Activated B cell treated with CpG ODN at 0.5 μM for 24 hours (primary cell): ENCODE measurements at regions of chr10 and their contacts with region 1.

Region 1: DNA sequence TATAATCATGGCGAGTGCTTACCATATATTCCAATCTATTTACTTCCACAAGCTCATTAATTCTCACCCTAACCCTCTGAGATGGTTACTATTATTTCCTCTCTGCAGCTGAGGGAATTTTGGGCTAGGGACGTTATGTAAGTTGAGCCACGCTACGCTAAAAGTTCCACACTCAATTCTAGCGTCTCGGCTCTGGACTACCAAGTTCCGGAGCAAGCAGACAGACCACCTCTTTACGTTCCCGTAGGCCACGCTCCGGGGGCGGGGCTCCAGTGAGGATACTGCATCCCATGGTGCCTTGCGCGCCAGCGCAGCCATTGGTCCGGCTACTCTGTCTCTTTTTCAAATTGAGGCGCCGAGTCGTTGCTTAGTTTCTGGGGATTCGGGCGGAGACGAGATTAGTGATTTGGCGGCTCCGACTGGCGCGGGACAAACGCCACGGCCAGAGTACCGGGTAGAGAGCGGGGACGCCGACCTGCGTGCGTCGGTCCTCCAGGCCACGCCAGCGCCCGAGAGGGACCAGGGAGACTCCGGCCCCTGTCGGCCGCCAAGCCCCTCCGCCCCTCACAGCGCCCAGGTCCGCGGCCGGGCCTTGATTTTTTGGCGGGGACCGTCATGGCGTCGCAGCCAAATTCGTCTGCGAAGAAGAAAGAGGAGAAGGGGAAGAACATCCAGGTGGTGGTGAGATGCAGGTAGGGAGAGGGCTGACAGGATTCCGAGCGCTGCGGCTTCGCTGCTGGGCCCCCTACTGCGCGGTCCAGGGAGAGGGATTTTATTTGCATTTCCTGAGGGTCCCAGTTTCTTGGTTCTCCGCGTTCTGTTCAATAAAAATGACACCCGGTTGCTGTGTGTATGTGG is at the start of gene KIF11:
- DNase-seq: peak; percentile 92
- ATAC-seq: peak; percentile 85
- H3K4me3 Mint-ChIP-seq: peak within 1 kb of the TSS; percentile 96
- H3K27ac Mint-ChIP-seq: peak within 1 kb of the TSS; percentile 99
- H3K4me1 Mint-ChIP-seq: peaks cover 36% of the 10 kb centered on the region
- H3K27me3 Mint-ChIP-seq: no peaks in the 10 kb centered on the region
- CTCF ChIP-seq: no peak
- total RNA-seq, gene KIF11: 2.2 and 2.5 TPM in 2 replicates

Region 2: DNA sequence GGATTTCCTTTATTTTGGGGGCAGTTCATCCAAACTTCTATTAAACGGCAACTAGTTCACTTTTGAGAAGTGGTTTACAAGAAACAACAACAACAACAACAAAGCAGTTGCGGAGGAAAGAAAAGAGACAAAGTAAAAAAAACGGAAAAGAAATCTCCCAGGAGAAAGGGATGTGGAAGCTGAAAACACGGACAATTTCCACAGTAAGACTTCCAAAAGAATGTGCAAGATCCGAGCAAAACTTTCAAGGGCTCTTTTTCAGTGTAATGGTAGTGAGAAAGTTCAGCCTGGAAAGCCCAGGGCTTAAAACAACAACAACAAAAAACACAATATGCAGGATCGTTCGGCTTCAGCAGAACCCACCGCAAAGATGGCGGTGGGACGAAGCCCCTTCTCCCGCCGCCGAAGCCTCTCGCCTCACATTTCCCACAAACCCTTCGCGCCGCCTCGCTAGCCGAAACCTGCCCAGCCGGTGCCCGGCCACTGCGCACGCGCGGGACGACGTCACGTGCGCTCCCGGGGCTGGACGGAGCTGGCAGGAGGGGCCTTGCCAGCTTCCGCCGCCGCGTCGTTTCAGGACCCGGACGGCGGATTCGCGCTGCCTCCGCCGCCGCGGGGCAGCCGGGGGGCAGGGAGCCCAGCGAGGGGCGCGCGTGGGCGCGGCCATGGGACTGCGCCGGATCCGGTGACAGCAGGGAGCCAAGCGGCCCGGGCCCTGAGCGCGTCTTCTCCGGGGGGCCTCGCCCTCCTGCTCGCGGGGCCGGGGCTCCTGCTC is 794.9 kb before region 1 on chr10 and contains the start of gene TNKS2:
- CTCF ChIA-PET with region 1: no interaction called
- POLR2A ChIA-PET with region 1: interaction called, 7 read pairs
- intact Hi-C with region 1: loop called (anchors 2 kb)
- DNase-seq: peak; percentile 96
- ATAC-seq: peak; percentile 70
- H3K4me3 Mint-ChIP-seq: peak within 1 kb of the TSS; percentile 93
- H3K27ac Mint-ChIP-seq: peak within 1 kb of the TSS; percentile 97
- H3K4me1 Mint-ChIP-seq: peaks cover 66% of the 10 kb centered on the region
- H3K27me3 Mint-ChIP-seq: no peaks in the 10 kb centered on the region
- CTCF ChIP-seq: no peak
- total RNA-seq, gene TNKS2: 29.5 and 33.1 TPM in 2 replicates

Region 3: DNA sequence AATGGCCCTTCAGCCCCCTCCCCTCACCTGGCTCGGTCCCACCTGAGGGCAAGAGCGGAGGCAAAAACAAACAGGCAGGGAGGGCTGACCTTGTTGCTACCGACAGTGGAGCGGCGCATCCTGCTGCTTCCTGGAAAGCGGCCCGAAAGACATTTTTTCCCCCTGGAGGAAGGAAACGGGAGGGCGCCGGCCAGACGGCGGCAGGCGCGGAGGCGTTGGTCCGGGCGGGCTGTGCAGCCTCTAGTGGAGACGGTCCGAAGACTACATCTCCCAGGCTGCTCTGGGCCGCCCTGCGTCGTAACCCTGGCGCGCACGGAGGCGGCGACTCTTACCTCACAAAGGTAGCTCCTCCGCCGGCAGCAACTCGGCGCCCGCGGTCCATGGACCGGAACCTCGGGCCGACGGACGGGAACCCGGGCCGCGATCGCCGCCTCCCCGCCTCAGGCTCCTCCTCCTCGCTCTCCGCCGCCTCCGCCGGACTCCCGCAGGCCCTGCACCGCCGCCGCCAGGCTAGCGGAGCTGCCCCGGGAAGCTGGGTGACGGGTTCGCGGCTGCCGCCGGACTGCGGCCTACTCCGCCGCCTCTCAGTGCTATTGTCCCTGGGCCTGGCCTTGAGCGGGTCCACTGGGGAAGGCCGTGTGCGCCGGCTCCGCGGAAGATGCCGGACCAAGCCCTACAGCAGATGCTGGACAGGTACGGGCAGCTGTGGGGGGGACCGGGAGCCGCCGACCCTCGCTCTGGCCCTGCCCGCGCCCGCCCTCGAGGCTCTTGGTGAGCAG is 302.0 kb before region 1 on chr10 and contains the starts of genes CPEB3 and MARCHF5:
- CTCF ChIA-PET with region 1: no interaction called
- POLR2A ChIA-PET with region 1: interaction called, 7 read pairs
- intact Hi-C with region 1: loop called (anchors 1 kb)
- DNase-seq: peak; percentile 87
- ATAC-seq: peak; percentile 97
- H3K4me3 Mint-ChIP-seq: peak within 1 kb of the TSS; percentile 96
- H3K27ac Mint-ChIP-seq: peak within 1 kb of the TSS; percentile 84
- H3K4me1 Mint-ChIP-seq: peaks cover 28% of the 10 kb centered on the region
- H3K27me3 Mint-ChIP-seq: no peaks in the 10 kb centered on the region
- CTCF ChIP-seq: no peak
- total RNA-seq, gene CPEB3: 2.2 and 2.5 TPM in 2 replicates
- total RNA-seq, gene MARCHF5: 21.6 and 26.5 TPM in 2 replicates

Region 4: DNA sequence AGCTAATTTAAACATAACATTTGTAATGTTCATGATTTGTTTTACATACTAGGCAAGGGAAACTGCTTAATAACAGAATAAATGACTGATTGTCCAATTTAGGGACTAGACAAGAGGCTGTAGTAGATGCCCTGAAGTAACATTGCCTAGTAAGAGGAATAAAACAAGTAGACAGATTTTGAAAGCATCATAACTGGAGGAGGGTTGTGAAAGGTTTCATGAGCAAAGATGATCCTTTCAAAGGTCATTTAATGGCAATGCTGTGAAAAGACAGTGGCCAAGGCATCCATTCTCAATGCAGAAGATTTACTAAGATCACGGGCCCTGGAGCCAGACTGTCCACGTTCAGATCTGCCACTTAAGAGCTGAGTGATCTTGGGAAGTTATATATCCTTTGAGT is 51.9 kb after region 1 on chr10:
- CTCF ChIA-PET with region 1: interaction called, 3 read pairs
- POLR2A ChIA-PET with region 1: no interaction called
- intact Hi-C with region 1: loop called (anchors 2 kb)
- DNase-seq: no peak
- ATAC-seq: no peak
- H3K4me3 Mint-ChIP-seq: no peak overlapping the region
- H3K27ac Mint-ChIP-seq: no peak overlapping the region
- H3K4me1 Mint-ChIP-seq: peaks cover 5% of the 10 kb centered on the region
- H3K27me3 Mint-ChIP-seq: no peaks in the 10 kb centered on the region
- CTCF ChIP-seq: no peak

Region 5: DNA sequence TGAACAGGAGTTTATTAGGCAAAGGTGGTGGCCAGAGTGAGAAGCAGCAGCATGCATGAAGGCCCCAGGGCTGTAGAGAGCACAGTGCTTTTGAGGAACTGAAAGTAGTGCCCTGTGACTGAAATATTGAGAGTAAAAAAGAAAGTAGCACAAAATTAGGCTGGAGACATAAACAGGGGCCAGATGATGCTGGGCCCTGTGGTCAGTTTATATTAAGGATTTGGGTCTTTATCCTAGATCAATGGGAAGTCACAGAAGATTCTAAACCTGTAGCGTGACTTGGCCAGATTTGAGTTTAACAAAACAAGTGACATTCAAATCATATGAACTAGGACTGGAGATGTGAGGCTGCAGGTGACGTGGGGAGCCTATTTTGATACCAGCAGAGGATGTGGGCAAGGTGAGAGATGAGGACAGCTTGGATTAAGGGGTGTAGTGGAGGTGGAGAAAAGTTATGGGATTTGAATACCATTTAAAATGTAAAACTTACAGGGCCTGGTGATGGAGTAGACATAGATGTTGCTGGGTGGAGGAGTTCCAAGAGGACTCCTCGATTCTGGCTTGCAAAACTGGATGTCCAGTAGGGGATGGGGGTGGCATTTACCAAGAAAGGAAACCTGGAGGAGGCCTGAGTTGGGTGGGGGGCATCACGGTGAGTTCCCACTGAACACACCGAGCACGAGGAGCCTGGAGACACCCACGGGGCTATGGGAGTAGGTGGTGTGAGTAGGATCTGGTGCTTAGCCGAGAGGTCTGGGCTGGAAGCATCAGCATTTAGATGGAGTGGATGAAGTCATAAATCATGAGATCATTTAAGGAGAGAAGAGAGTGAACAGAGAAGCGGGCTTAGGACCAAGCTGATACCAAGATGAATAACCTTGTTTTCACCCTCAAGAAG is 149.6 kb after region 1 on chr10:
- CTCF ChIA-PET with region 1: no interaction called
- POLR2A ChIA-PET with region 1: interaction called, 6 read pairs
- intact Hi-C with region 1: loop called (anchors 1 kb)
- DNase-seq: peak; percentile 30
- ATAC-seq: peak; percentile 95
- H3K4me3 Mint-ChIP-seq: peak overlapping the region; percentile 78
- H3K27ac Mint-ChIP-seq: peak overlapping the region; percentile 95
- H3K4me1 Mint-ChIP-seq: peaks cover 79% of the 10 kb centered on the region
- H3K27me3 Mint-ChIP-seq: no peaks in the 10 kb centered on the region
- CTCF ChIP-seq: no peak

Region 6: DNA sequence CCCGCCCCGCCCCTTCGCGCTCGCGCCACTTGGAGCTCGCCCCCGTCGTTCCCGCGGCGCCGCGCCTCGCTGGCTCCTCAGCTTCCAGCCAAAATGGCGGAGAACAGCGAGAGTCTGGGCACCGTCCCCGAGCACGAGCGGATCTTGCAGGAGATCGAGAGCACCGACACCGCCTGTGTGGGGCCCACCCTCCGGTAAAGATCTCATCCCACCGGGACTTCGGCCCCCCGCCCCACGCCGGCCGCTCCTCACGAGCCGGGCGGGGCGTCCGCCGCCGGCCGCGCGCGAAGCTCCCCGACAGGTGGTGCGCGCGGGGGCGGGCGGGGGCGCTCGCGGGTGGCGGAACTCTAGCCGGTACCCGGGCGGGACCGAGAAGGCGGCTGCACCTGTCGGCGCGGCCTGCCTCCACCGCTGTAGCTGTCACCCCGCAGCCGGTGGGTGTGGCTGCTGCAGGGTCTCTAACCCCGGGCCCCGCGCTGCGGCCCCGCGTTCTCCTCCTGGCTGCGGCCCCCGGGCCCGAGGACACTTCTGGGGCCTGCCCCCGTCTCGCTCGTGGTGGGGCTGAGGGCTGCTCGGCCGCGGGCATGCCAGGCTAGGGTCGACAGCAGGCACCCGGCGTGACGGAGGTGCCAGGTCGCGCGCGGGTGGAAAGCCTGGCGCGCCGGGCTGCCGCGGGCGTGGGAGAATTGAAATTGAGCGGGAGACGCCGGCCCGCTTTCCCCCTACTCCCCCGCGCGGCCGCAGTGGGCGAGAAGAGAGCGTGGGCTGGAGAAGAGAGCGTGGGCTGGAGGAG is 255.6 kb after region 1 on chr10 and contains the start of gene EXOC6:
- CTCF ChIA-PET with region 1: interaction called, 10 read pairs
- POLR2A ChIA-PET with region 1: interaction called, 32 read pairs
- intact Hi-C with region 1: loop called (anchors 1 kb)
- DNase-seq: peak; percentile 89
- ATAC-seq: peak; percentile 84
- H3K4me3 Mint-ChIP-seq: peak within 1 kb of the TSS; percentile 87
- H3K27ac Mint-ChIP-seq: peak within 1 kb of the TSS; percentile 87
- H3K4me1 Mint-ChIP-seq: peaks cover 34% of the 10 kb centered on the region
- H3K27me3 Mint-ChIP-seq: no peaks in the 10 kb centered on the region
- CTCF ChIP-seq: no peak
- total RNA-seq, gene EXOC6: 15.3 and 17.3 TPM in 2 replicates

Region 7: DNA sequence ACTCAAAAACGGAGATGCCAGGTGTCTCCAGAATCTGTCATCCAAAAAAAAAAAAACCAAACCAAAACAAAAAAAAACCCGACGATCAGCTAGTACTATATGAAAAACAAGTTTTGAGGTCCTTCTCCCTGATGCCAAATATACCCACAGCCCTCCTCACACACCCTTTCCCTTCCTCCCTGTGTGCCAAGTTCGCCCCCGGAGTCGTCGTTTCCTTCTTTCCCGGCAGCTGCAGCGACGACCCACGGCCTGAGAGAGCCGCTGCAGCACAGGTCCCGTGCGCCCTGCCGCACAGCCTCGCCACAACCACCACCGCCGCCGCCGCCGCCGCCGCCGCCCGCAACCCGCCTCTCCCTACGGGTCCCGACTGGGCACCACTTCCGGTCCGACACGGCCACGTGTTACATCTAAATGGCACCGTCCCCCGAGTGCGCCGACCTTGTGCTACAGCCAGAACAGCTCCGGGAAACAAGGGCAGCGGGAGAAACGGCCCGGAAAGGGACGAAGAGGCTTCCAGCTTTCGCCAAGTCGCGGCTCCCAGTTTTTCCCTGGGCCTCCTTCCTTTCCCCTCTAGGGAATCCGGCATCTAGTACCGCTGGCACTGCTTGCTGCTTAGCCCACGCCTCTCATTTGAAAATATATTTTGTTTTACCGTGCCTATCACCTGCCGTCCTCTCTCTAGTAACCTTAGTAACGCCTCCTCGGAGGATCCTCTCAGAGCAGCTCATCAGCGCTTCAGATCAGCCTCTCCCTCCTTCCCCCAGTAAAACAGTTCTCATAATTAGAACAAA is 1109.4 kb after region 1 on chr10 and contains the start of gene FRA10AC1:
- CTCF ChIA-PET with region 1: no interaction called
- POLR2A ChIA-PET with region 1: interaction called, 3 read pairs
- intact Hi-C with region 1: loop called (anchors 5 kb)
- DNase-seq: peak; percentile 87
- ATAC-seq: peak; percentile 88
- H3K4me3 Mint-ChIP-seq: no peak within 1 kb of the TSS
- H3K27ac Mint-ChIP-seq: no peak within 1 kb of the TSS
- H3K4me1 Mint-ChIP-seq: peaks cover 11% of the 10 kb centered on the region
- H3K27me3 Mint-ChIP-seq: no peaks in the 10 kb centered on the region
- CTCF ChIP-seq: no peak
- total RNA-seq, gene FRA10AC1: 20.3 and 24.8 TPM in 2 replicates